Activated CD4-positive, alpha-beta T cell treated with anti-CD3 and anti-CD28 coated beads for 36 hours (primary cell): ENCODE measurements at regions of chr1 and their contacts with region 1.

Region 1: DNA sequence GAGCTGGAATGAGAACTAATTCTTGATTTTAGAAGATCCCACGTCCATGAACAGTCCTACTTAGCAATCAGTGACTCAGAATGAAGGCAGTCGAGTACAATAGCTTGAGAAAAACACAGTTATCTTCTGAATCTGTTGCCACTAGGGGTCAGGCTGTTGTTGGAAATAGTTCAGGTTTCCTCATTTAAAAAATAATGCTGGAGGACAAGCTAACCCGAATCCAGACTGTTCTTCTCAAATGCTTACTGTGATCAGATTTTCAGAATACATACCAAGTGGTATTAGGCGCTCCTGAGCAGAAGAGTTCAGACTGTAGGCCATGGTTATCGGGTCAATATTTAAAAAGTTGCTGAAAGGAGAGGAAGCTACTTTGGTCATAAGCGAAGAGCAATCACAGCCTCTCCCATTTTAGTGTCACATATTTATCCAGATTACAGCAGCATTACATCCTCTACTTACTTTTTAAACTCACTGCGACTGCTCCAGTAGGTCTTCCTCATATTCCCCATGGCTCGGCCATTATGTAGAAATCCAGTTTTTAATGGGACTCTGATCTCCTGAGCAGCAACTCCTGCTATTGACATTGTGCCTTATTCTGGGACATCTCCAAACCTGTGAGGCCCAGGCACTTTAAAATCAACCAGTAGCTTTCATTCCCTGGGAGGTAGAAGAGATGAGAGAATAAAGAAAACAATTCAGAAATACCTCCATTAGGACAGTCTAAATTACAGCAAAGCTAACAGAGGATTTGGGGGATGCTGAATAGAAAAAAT is 10.9 kb downstream of the ERRFI1 start:
- DNase-seq: peak; percentile 51
- ATAC-seq: peak; percentile 83
- H3K4me3 Mint-ChIP-seq: no peak overlapping the region
- H3K27ac Mint-ChIP-seq: no peak overlapping the region
- H3K4me1 Mint-ChIP-seq: peaks cover 2% of the 10 kb centered on the region
- H3K27me3 Mint-ChIP-seq: peaks cover 10% of the 10 kb centered on the region

Region 2: GRCh38 chr1:7975212-7975865 is 39.9 kb before region 1 on chr1:
- CTCF ChIA-PET with region 1: interaction called, 15 read pairs
- POLR2A ChIA-PET with region 1: no interaction called
- intact Hi-C with region 1: no loop called
- DNase-seq: peak; percentile 56
- ATAC-seq: peak; percentile 83
- H3K4me3 Mint-ChIP-seq: no peak overlapping the region
- H3K27ac Mint-ChIP-seq: no peak overlapping the region
- H3K4me1 Mint-ChIP-seq: peaks cover 2% of the 10 kb centered on the region
- H3K27me3 Mint-ChIP-seq: no peaks in the 10 kb centered on the region

Region 3: GRCh38 chr1:8302081-8302956 is 287.1 kb after region 1 on chr1:
- CTCF ChIA-PET with region 1: interaction called, 11 read pairs
- POLR2A ChIA-PET with region 1: no interaction called
- intact Hi-C with region 1: no loop called
- DNase-seq: no peak
- ATAC-seq: no peak
- H3K4me3 Mint-ChIP-seq: no peak overlapping the region
- H3K27ac Mint-ChIP-seq: no peak overlapping the region
- H3K4me1 Mint-ChIP-seq: no peaks in the 10 kb centered on the region
- H3K27me3 Mint-ChIP-seq: peaks cover 14% of the 10 kb centered on the region

Region 4: GRCh38 chr1:8314346-8315280 is 299.4 kb after region 1 on chr1:
- CTCF ChIA-PET with region 1: interaction called, 79 read pairs
- POLR2A ChIA-PET with region 1: no interaction called
- intact Hi-C with region 1: loop called (anchors 1 to 5 kb)
- DNase-seq: peak; percentile 73
- ATAC-seq: peak; percentile 51
- H3K4me3 Mint-ChIP-seq: no peak overlapping the region
- H3K27ac Mint-ChIP-seq: no peak overlapping the region
- H3K4me1 Mint-ChIP-seq: peaks cover 12% of the 10 kb centered on the region
- H3K27me3 Mint-ChIP-seq: peaks cover 27% of the 10 kb centered on the region